IMR-90 (cell line): ENCODE measurements at regions of chr5 and their contacts with region 1.

Region 1: GRCh38 chr5:73625944-73626811 is at the start of gene ARHGEF28:
- DNase-seq: peak; percentile 28
- ATAC-seq: peak; percentile 90
- H3K4me3 ChIP-seq: peak within 1 kb of the TSS; percentile 72
- H3K27ac ChIP-seq: peak within 1 kb of the TSS; percentile 67; the same call in 1 of the 2 replicates
- H3K4me1 ChIP-seq: peaks cover 3% of the 10 kb centered on the region; the same call in 1 of the 2 replicates
- H3K27me3 ChIP-seq: no peaks in the 10 kb centered on the region
- CTCF ChIP-seq: no peak
- POLR2A ChIP-seq: no peak
- RAD21 ChIP-seq: no peak
- total RNA-seq, gene ARHGEF28: 13.9 and 16.0 TPM in 2 replicates

Region 2: GRCh38 chr5:73654171-73654811 is 28.1 kb after region 1 on chr5:
- CTCF ChIA-PET with region 1: no interaction called
- POLR2A ChIA-PET with region 1: interaction called, 10 read pairs
- dilution Hi-C with region 1: no loop called
- in situ Hi-C with region 1: no loop called
- intact Hi-C with region 1: no loop called
- DNase-seq: peak; percentile 69
- ATAC-seq: peak; percentile 71
- H3K4me3 ChIP-seq: no peak overlapping the region
- H3K27ac ChIP-seq: no peak overlapping the region
- H3K4me1 ChIP-seq: peaks cover 8% of the 10 kb centered on the region; the same call in 1 of the 2 replicates
- H3K27me3 ChIP-seq: no peaks in the 10 kb centered on the region
- CTCF ChIP-seq: no peak
- POLR2A ChIP-seq: no peak
- RAD21 ChIP-seq: no peak

Region 3: DNA sequence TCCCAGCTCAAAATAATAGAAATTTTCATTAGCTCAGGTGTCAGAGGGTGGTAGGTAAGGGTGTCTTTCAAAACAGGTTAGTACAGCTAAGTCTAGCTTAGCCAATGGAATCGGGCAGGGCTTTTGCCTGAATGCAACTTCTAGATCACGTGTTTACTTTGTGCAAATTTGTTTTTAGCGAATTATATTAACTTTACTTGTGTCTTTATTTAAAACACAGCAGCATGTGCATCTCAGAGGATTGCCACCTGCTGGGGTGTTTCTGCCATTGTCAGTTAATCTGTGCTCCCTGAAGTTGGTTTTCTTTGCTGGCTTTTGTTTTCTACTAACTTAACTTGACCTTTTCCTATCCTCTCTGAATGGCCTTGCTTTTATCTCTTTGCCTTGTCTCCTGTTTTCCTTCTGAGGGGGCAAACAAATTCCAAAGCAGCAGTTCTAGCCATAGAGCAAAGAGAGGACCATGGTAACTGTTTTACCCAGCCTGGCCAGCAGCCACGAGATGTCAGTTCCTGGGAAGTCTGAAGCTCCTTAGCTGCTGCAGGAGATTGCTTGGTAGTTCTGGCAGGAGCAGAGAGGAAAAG is 67.4 kb after region 1 on chr5:
- CTCF ChIA-PET with region 1: interaction called, 3 read pairs
- POLR2A ChIA-PET with region 1: no interaction called
- dilution Hi-C with region 1: no loop called
- in situ Hi-C with region 1: no loop called
- intact Hi-C with region 1: loop called (anchors 5 kb)
- DNase-seq: peak; percentile 49
- ATAC-seq: peak; percentile 16; the same call in 1 of the 2 replicates
- H3K4me3 ChIP-seq: no peak overlapping the region
- H3K27ac ChIP-seq: peak overlapping the region; percentile 17; the same call in 1 of the 2 replicates
- H3K4me1 ChIP-seq: peaks cover 23% of the 10 kb centered on the region
- H3K27me3 ChIP-seq: no peaks in the 10 kb centered on the region
- CTCF ChIP-seq: peak; percentile 59
- POLR2A ChIP-seq: no peak
- RAD21 ChIP-seq: peak; percentile 53